Mammary epithelial cell (primary cell): ENCODE measurements at regions of chr22 and their contacts with region 1.

Region 1: DNA sequence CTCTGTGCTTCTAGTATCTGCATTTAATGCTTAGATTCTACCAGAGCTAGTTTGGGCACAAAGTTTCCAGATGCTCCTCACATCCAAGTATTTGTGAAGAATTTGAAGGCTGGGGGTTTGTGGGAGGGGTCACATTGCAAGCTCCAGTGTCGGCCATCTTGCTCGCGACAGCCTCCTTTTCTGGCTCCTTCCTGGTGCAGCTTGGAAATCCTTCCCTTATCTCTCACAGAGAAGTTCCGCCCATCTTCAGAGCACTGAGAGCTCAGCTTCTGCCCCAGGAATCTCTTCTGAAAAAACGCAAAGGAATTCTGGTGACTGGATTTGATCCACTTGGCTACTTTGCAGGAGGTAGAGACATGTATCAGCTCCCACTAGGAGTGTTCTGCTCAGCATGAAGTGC is 497.5 kb downstream of the TBC1D22A start:
- DNase-seq: no peak
- H3K4me3 ChIP-seq: no peak overlapping the region
- H3K27ac ChIP-seq: no peak overlapping the region
- H3K4me1 ChIP-seq: no peaks in the 10 kb centered on the region
- H3K27me3 ChIP-seq: no peaks in the 10 kb centered on the region
- CTCF ChIP-seq: no peak

Region 2: GRCh38 chr22:47110791-47111443 is 149.1 kb before region 1 on chr22:
- CTCF ChIA-PET with region 1: no interaction called
- dilution Hi-C with region 1: no loop called
- in situ Hi-C with region 1: no loop called
- intact Hi-C with region 1: no loop called
- DNase-seq: no peak
- H3K4me3 ChIP-seq: no peak overlapping the region
- H3K27ac ChIP-seq: no peak overlapping the region
- H3K4me1 ChIP-seq: peaks cover 14% of the 10 kb centered on the region
- H3K27me3 ChIP-seq: no peaks in the 10 kb centered on the region
- CTCF ChIP-seq: no peak

Region 3: DNA sequence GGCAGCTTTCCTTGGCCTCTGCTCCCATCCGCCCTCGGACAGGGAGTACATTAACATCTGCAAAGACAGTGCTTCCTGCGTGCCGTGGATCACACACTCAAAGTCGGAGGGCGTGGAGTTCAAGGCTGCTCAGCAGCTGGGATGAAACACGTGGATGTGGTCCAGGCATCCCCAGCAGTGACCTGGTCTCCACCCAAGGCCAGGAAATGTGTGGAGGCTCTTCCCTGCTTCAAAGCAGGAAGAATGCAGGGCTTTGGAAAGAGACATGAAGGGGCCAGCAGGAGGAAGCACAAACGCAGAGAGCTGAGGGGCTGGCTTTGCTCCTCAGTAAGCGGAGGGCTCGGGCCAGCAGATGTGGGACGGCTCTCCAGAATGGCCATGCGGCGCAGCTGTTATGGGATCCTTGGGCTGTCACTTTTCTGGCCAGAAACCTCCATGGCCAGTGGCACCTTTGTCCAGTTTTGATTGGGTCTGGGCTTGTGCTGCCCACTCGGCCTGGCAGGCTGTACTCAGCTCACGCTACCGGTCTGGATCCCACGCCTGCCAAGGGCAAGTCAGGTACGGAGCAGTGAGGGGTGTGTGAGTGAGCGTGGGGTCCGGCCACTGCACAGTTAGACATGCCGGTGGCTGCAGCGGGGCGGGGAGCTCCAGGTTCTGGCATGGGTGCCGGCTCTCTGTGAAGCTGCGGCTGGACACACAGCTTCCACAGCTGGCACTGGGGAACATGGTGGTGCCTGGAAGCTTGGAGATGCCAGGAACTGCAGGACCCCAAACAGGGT is 59.5 kb before region 1 on chr22:
- CTCF ChIA-PET with region 1: no interaction called
- dilution Hi-C with region 1: loop called (anchors 10 kb)
- in situ Hi-C with region 1: no loop called
- intact Hi-C with region 1: no loop called
- DNase-seq: no peak
- H3K4me3 ChIP-seq: no peak overlapping the region
- H3K27ac ChIP-seq: no peak overlapping the region
- H3K4me1 ChIP-seq: no peaks in the 10 kb centered on the region
- H3K27me3 ChIP-seq: no peaks in the 10 kb centered on the region
- CTCF ChIP-seq: no peak

Region 4: DNA sequence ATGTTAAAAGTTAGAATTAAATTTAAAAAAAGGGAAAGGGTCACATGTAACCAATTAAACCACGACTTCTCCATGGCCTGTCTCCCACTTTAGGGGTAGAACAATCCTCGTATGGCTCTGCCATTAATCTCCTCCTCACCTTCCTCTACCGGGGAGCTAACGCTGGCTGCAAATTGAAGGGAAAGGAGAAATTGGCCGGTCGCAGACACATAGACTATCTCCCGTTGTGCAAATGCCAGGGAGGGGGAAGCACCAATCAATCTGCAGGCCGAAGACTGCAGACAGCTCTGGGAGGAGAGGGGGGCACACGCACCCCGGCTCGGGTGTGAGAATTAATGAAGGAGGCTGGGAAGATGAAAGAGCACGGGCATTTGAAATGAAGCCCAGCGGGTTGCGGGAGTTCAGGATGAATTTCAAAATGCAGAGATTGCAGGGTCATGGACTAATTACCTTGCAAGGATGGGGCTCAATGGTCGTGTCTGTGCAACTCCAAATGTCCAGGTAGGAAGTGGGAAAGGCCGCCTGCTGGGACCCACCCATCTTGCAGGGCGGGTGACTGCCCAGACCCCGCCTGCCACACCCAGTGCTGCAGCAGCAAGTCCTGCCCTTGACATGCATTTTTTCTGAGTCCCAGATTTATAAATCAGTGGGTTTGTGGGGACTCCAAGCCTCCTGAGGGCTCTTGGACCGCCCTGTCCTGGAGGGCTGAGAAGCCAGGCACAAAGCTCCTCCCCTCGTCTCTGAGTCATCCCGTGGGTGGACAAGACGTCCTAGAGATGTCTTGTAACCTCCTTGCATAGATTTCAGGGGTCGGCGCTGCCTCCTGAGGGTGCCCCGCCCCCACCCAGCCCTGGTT is 36.6 kb after region 1 on chr22:
- CTCF ChIA-PET with region 1: no interaction called
- dilution Hi-C with region 1: loop called (anchors 5 kb)
- in situ Hi-C with region 1: no loop called
- intact Hi-C with region 1: no loop called
- DNase-seq: no peak
- H3K4me3 ChIP-seq: no peak overlapping the region
- H3K27ac ChIP-seq: no peak overlapping the region
- H3K4me1 ChIP-seq: no peaks in the 10 kb centered on the region
- H3K27me3 ChIP-seq: no peaks in the 10 kb centered on the region
- CTCF ChIP-seq: no peak